ENCODE measurements at regions of chr7 and their contacts with region 1.

Region 1: DNA sequence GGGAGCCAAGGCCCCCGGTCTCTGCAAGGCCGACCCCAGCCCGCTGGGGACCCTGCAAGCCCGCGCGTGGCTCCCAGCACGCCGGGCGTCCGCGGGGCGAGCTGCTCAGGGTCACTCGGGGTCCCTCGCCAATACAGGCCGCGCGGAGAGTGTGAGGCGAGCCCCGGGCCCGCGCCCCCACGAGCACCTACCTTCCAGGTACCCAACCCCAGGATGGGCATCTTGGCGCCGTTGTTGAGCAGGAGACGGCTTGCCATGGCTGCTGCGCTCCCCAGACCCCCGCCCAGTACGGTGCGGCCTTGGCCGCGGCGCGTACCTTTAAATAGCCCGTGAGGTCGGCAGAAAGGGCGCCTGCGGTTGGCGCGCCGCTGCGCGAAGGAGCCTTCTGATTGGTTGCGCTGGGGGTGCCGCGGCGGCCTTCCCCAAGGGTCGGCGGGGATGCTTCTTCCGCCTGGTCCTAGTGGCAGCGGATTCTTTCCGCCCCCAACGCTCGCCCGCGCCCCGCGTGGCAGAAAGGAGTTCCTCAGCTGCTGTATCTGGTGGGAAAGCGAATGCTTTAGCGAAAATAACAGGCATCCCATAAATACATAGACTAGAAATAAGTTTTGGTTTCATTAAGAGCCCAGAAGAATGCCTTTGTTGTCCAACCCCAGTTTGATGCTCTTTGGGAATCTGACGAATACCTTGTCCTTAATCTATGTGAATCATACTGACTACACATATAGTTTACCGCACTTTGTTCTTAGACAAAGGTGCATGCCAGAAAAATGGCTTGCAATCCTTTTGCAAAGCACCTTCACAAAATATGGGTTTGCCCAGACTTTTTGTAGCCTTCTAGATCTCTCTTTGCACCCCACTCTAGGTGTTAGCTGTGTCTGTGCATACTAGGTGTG is at the start of gene AKR1B1:
- DNase-seq: peak; percentile 87
- H3K4me3 Mint-ChIP-seq: peak within 1 kb of the TSS; percentile 90
- H3K27ac Mint-ChIP-seq: peak within 1 kb of the TSS; percentile 81
- H3K4me1 Mint-ChIP-seq: peaks cover 44% of the 10 kb centered on the region
- H3K27me3 Mint-ChIP-seq: no peaks in the 10 kb centered on the region
- total RNA-seq, gene AKR1B1: 99.7 and 111 TPM in 2 replicates

Region 2: GRCh38 chr7:134432296-134433152 is 26.5 kb before region 1 on chr7:
- intact Hi-C with region 1: loop called (anchors 1 kb)
- DNase-seq: peak; percentile 61
- H3K4me3 Mint-ChIP-seq: peak overlapping the region; percentile 78
- H3K27ac Mint-ChIP-seq: peak overlapping the region; percentile 79
- H3K4me1 Mint-ChIP-seq: peaks cover 23% of the 10 kb centered on the region
- H3K27me3 Mint-ChIP-seq: peaks cover 3% of the 10 kb centered on the region

Region 3: GRCh38 chr7:134613623-134614347 is 154.7 kb after region 1 on chr7:
- intact Hi-C with region 1: loop called (anchors 1 kb)
- DNase-seq: peak; percentile 5
- H3K4me3 Mint-ChIP-seq: peak overlapping the region; percentile 0
- H3K27ac Mint-ChIP-seq: peak overlapping the region; percentile 86
- H3K4me1 Mint-ChIP-seq: peaks cover 13% of the 10 kb centered on the region
- H3K27me3 Mint-ChIP-seq: peaks cover 15% of the 10 kb centered on the region

Region 4: DNA sequence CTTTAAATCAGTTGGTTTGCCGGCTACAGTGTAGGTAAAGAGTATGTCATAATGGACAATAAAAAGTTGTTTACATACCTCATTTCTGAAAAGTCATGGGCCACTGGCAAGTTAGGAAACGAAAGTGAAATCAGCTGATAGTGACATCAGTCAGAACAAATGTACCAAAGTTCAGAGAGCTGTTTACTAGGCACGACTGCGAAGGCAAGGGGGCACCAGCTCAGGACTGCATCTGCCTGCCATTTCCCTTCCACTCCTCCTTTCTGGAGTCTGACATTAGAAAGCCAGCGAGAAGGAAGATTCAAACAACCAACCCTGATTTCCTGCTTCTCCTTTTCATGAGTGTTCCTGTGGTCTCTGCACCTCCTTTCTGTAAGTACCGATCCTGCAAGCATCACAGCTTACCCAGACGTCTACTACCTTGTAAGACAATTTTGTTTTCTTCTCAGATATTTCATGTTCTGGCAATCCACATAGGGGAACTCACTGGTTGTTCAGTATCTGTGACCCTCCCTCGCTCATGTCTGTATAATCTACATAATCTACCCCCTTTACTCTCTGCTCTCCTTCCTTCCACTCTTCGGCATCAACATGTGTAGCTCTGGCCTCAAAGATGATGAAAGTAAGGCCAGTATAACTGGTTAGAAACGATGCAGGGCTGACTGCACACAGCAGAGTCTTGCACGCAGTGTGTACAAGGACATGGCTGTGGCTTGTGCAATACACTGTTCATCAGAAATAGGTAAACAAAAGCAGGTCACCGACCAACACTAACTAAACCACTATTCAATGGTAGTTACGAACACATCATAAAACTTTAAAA is 689.1 kb after region 1 on chr7 and contains the start of gene TMEM140:
- intact Hi-C with region 1: loop called (anchors 1 kb)
- DNase-seq: peak; percentile 61
- H3K4me3 Mint-ChIP-seq: peak within 1 kb of the TSS; percentile 88
- H3K27ac Mint-ChIP-seq: peak within 1 kb of the TSS; percentile 96
- H3K4me1 Mint-ChIP-seq: peaks cover 60% of the 10 kb centered on the region
- H3K27me3 Mint-ChIP-seq: no peaks in the 10 kb centered on the region
- total RNA-seq, gene TMEM140: 2.9 and 4.5 TPM in 2 replicates

Region 5: GRCh38 chr7:135509903-135510602 is 1051.0 kb after region 1 on chr7 and contains the start of gene CNOT4:
- intact Hi-C with region 1: loop called (anchors 2 kb)
- DNase-seq: peak; percentile 92
- H3K4me3 Mint-ChIP-seq: no peak within 1 kb of the TSS
- H3K27ac Mint-ChIP-seq: no peak within 1 kb of the TSS
- H3K4me1 Mint-ChIP-seq: no peaks in the 10 kb centered on the region
- H3K27me3 Mint-ChIP-seq: no peaks in the 10 kb centered on the region
- total RNA-seq, gene CNOT4: 21.3 and 23.3 TPM in 2 replicates

Region 6: DNA sequence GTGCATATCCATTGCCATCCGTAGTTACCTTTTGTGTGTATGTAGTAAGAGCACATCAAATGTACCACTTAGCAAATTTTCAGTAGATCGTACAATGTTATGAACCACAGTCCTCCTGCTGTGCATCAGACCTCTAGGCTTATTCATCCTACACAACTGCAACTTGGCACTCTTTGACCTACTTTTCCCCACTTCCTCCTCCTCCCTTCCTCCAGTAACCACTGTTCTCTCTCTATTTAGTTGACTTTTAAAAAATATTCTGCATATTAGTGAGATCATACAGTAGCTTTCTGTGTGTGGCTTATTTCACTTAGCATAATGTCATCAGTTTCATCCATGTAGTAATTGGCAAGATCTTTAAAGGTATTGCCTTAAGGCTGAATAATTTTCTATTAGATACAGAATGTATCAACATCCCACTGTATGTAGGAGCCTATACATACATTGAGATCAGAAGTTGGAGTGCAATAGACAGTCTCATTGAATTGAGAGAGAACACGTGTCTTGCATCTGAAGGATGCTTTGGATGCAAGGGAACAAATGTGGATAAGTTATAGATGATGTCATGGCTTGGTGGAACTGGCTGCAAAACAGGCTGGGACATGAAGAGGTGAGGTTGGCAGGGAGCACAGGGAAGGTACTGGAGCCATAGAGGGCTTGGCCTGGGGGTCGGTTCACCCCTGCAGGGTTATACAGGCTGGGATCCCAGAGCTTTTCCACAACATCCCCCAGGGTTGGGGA is 1372.6 kb after region 1 on chr7:
- intact Hi-C with region 1: no loop called
- DNase-seq: no peak
- H3K4me3 Mint-ChIP-seq: no peak overlapping the region
- H3K27ac Mint-ChIP-seq: no peak overlapping the region
- H3K4me1 Mint-ChIP-seq: peaks cover 7% of the 10 kb centered on the region
- H3K27me3 Mint-ChIP-seq: peaks cover 3% of the 10 kb centered on the region